Activated CD4-positive, alpha-beta T cell treated with anti-CD3 and anti-CD28 coated beads for 36 hours (primary cell): ENCODE measurements at regions of chr16 and their contacts with region 1.

Region 1: GRCh38 chr16:88650749-88651275 is at the start of gene CYBA:
- DNase-seq: peak; percentile 92
- ATAC-seq: peak; percentile 87
- H3K4me3 Mint-ChIP-seq: peak within 1 kb of the TSS; percentile 85
- H3K27ac Mint-ChIP-seq: peak within 1 kb of the TSS; percentile 93
- H3K4me1 Mint-ChIP-seq: peaks cover 15% of the 10 kb centered on the region
- H3K27me3 Mint-ChIP-seq: no peaks in the 10 kb centered on the region
- total RNA-seq, gene CYBA: 155 to 200 TPM

Region 2: DNA sequence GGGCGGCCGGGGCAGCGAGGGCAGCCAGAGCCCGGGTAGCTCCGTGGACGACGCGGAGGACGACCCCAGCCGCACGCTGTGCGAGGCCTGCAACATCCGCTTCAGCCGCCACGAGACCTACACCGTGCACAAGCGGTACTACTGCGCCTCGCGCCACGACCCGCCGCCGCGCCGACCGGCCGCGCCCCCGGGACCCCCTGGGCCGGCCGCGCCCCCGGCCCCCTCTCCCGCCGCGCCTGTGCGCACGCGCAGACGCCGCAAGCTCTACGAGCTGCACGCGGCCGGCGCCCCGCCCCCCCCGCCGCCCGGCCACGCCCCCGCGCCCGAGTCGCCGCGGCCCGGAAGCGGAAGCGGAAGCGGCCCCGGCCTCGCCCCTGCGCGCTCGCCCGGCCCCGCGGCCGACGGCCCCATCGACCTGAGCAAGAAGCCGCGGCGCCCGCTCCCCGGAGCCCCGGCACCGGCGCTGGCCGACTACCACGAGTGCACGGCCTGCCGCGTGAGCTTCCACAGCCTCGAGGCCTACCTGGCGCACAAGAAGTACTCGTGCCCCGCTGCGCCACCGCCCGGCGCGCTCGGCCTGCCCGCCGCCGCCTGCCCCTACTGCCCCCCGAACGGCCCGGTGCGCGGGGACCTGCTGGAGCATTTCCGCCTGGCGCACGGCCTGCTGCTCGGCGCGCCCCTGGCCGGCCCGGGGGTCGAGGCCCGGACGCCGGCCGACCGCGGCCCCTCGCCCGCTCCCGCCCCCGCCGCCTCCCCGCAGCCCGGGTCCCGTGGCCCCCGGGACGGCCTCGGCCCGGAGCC is 116.7 kb before region 1 on chr16:
- CTCF ChIA-PET with region 1: no interaction called
- POLR2A ChIA-PET with region 1: no interaction called
- intact Hi-C with region 1: loop called in 1 of 2 experiments (anchors 1 kb)
- DNase-seq: peak; percentile 89
- ATAC-seq: peak; percentile 78
- H3K4me3 Mint-ChIP-seq: peak overlapping the region; percentile 74
- H3K27ac Mint-ChIP-seq: no peak overlapping the region
- H3K4me1 Mint-ChIP-seq: peaks cover 7% of the 10 kb centered on the region
- H3K27me3 Mint-ChIP-seq: peaks cover 4% of the 10 kb centered on the region

Region 3: GRCh38 chr16:88633684-88634140 is 17.1 kb before region 1 on chr16:
- CTCF ChIA-PET with region 1: no interaction called
- POLR2A ChIA-PET with region 1: interaction called, 5 read pairs
- intact Hi-C with region 1: loop called (anchors 1 to 2 kb)
- DNase-seq: peak; percentile 81
- ATAC-seq: peak; percentile 53
- H3K4me3 Mint-ChIP-seq: peak overlapping the region; percentile 56
- H3K27ac Mint-ChIP-seq: no peak overlapping the region
- H3K4me1 Mint-ChIP-seq: peaks cover 38% of the 10 kb centered on the region
- H3K27me3 Mint-ChIP-seq: peaks cover 16% of the 10 kb centered on the region

Region 4: GRCh38 chr16:88686439-88687253 is 35.8 kb after region 1 on chr16 and contains the start of gene SNAI3:
- CTCF ChIA-PET with region 1: no interaction called
- POLR2A ChIA-PET with region 1: no interaction called
- intact Hi-C with region 1: loop called in 1 of 2 experiments (anchors 1 kb)
- DNase-seq: peak; percentile 91
- ATAC-seq: peak; percentile 69
- H3K4me3 Mint-ChIP-seq: peak within 1 kb of the TSS; percentile 70
- H3K27ac Mint-ChIP-seq: peak within 1 kb of the TSS; percentile 37
- H3K4me1 Mint-ChIP-seq: peaks cover 42% of the 10 kb centered on the region
- H3K27me3 Mint-ChIP-seq: no peaks in the 10 kb centered on the region
- total RNA-seq, gene SNAI3: 3.6 to 4.1 TPM

Region 5: DNA sequence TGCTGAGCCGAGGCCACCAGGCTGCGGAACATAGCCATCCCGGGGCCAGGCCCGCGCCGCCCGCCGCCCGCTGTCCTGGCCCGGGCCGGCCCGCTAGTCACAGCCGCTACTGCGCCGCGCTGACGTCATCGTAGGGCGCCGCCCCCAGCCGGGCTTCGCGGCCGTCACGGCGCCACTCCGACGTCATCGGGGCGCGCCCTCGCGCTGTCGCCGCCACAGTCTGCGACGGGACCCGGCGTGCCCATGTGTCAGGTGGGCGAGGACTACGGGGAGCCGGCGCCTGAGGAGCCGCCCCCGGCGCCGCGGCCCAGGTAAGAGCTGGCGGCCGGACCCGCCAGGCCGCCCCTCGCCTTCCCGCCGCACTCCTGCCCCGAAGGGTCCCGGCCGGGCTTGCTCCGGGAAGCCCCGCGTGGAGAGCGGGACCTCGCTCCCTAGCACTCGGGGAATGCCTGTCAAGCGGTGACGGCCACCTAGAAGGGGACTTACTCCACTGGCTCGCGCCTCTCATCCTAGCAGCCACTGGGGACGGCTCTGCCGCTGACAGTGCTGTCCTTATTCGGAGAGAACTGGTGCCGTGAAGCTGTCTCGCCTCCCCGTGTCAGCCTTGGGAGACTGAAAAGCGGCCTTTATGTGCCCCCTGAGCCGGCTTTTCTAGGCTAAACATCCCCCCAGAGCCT is 55.6 kb after region 1 on chr16 and contains the starts of genes CTU2 and RNF166:
- CTCF ChIA-PET with region 1: no interaction called
- POLR2A ChIA-PET with region 1: no interaction called
- intact Hi-C with region 1: loop called (anchors 1 to 2 kb)
- DNase-seq: peak; percentile 96
- ATAC-seq: peak; percentile 59
- H3K4me3 Mint-ChIP-seq: peak within 1 kb of the TSS; percentile 92
- H3K27ac Mint-ChIP-seq: peak within 1 kb of the TSS; percentile 92
- H3K4me1 Mint-ChIP-seq: peaks cover 43% of the 10 kb centered on the region
- H3K27me3 Mint-ChIP-seq: no peaks in the 10 kb centered on the region
- total RNA-seq, gene CTU2: 29.6 to 36.2 TPM
- total RNA-seq, gene RNF166: 44.0 to 49.7 TPM

Region 6: GRCh38 chr16:88727871-88728270 is 77.1 kb after region 1 on chr16:
- CTCF ChIA-PET with region 1: no interaction called
- POLR2A ChIA-PET with region 1: no interaction called
- intact Hi-C with region 1: no loop called
- DNase-seq: no peak
- ATAC-seq: no peak
- H3K4me3 Mint-ChIP-seq: no peak overlapping the region
- H3K27ac Mint-ChIP-seq: no peak overlapping the region
- H3K4me1 Mint-ChIP-seq: no peaks in the 10 kb centered on the region
- H3K27me3 Mint-ChIP-seq: no peaks in the 10 kb centered on the region

Region 7: GRCh38 chr16:88811769-88812512 is 161.1 kb after region 1 on chr16 and contains the start of gene APRT:
- CTCF ChIA-PET with region 1: no interaction called
- POLR2A ChIA-PET with region 1: no interaction called
- intact Hi-C with region 1: loop called in 1 of 2 experiments (anchors 1 kb)
- DNase-seq: peak; percentile 99
- ATAC-seq: peak; percentile 76
- H3K4me3 Mint-ChIP-seq: peak within 1 kb of the TSS; percentile 86
- H3K27ac Mint-ChIP-seq: peak within 1 kb of the TSS; percentile 94
- H3K4me1 Mint-ChIP-seq: peaks cover 22% of the 10 kb centered on the region
- H3K27me3 Mint-ChIP-seq: no peaks in the 10 kb centered on the region
- total RNA-seq, gene APRT: 105 to 179 TPM

Region 8: GRCh38 chr16:89277641-89278341 is 627.0 kb after region 1 on chr16:
- CTCF ChIA-PET with region 1: no interaction called
- POLR2A ChIA-PET with region 1: no interaction called
- intact Hi-C with region 1: no loop called
- DNase-seq: no peak
- ATAC-seq: no peak
- H3K4me3 Mint-ChIP-seq: no peak overlapping the region
- H3K27ac Mint-ChIP-seq: no peak overlapping the region
- H3K4me1 Mint-ChIP-seq: no peaks in the 10 kb centered on the region
- H3K27me3 Mint-ChIP-seq: no peaks in the 10 kb centered on the region